IMR-90 (cell line): ENCODE measurements at regions of chr11 and their contacts with region 1.

Region 1: DNA sequence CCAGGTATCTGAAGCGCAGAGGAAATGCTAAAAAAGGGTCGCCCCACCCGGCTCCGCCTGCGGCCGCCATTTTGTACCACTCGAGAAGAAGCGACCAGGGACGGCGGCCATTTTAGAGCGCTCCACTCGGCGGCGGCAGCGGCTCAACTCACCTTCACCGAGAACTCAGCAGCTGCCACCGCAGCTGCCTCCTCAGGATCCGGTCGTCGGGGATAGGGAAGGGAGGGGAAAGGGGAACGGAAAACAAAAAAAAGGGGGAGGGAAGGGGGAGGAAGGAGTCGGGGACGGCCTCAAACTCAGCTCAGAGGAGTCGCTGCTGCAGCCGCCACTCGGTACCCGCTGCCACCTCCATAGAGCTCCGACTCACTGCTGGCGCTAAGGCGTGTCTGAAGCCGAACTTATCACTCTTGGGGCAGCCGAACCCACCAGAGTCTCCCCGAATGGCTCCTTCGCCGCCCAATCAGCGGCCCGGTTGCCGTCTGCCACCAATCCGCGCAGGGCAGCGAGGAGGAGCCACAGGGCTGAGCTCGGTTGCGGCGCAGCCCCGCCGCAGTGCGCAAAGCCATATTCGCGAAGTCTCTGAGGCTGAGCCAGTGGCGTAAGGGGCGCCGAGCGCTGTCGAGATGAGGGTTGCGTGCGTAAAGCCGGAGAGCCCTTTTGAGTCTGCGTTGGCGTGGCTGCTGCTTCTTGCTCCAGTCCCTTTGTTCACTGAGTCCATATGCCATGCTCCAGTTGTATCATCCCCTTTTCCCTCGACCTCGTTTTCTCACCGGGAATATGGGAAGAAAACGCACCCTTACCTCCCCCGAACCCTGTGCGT is at the start of gene EIF4G2:
- DNase-seq: peak; percentile 99
- ATAC-seq: peak; percentile 95
- H3K4me3 ChIP-seq: peak within 1 kb of the TSS; percentile 96
- H3K27ac ChIP-seq: peak within 1 kb of the TSS; percentile 99
- H3K4me1 ChIP-seq: peaks cover 4% of the 10 kb centered on the region
- H3K27me3 ChIP-seq: no peaks in the 10 kb centered on the region
- CTCF ChIP-seq: no peak
- POLR2A ChIP-seq: peak; percentile 100
- RAD21 ChIP-seq: no peak; the same call in 1 of the 2 replicates
- total RNA-seq, gene EIF4G2: 1,144 and 1,216 TPM in 2 replicates

Region 2: GRCh38 chr11:10779086-10779485 is 29.7 kb before region 1 on chr11:
- CTCF ChIA-PET with region 1: interaction called, 4 read pairs
- POLR2A ChIA-PET with region 1: interaction called, 5 read pairs
- dilution Hi-C with region 1: no loop called
- in situ Hi-C with region 1: no loop called
- intact Hi-C with region 1: loop called (anchors 1 kb)
- DNase-seq: no peak
- ATAC-seq: no peak
- H3K4me3 ChIP-seq: no peak overlapping the region
- H3K27ac ChIP-seq: peak overlapping the region; percentile 49
- H3K4me1 ChIP-seq: peaks cover 10% of the 10 kb centered on the region
- H3K27me3 ChIP-seq: no peaks in the 10 kb centered on the region
- CTCF ChIP-seq: no peak
- POLR2A ChIP-seq: no peak
- RAD21 ChIP-seq: no peak

Region 3: DNA sequence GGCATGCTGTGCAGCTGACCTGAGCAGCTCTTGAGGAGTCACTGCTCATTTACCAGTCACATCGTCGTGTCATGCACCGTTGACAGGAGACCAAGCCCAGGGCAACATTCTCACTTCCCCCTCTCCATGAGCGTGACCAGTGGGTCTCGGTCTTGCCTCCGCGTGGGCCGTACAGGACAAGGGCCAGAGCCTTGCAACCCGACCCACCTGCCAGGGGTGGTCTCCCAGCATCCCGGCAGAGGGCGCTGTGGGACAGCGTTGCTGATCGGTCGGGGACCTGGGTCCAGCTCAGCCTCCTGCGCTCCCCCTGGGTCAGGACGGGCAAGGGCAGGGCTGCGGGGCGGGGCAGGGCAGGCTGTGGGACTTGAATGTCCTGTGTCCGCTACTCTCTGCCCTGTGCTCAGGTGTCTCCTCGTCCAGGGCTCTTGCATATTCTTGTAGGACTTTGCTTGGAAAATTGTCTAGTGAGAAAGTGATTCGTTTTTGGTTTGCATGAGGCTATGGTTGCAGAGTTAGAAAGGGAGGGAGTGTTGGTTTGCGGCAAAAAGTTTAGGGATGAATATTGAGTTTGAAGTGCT is 16.3 kb before region 1 on chr11:
- CTCF ChIA-PET with region 1: interaction called, 9 read pairs
- POLR2A ChIA-PET with region 1: interaction called, 26 read pairs
- dilution Hi-C with region 1: no loop called
- in situ Hi-C with region 1: no loop called
- intact Hi-C with region 1: no loop called
- DNase-seq: peak; percentile 62
- ATAC-seq: peak; percentile 94
- H3K4me3 ChIP-seq: no peak overlapping the region
- H3K27ac ChIP-seq: no peak overlapping the region
- H3K4me1 ChIP-seq: no peaks in the 10 kb centered on the region
- H3K27me3 ChIP-seq: no peaks in the 10 kb centered on the region
- CTCF ChIP-seq: peak; percentile 93
- POLR2A ChIP-seq: no peak
- RAD21 ChIP-seq: peak; percentile 92

Region 4: DNA sequence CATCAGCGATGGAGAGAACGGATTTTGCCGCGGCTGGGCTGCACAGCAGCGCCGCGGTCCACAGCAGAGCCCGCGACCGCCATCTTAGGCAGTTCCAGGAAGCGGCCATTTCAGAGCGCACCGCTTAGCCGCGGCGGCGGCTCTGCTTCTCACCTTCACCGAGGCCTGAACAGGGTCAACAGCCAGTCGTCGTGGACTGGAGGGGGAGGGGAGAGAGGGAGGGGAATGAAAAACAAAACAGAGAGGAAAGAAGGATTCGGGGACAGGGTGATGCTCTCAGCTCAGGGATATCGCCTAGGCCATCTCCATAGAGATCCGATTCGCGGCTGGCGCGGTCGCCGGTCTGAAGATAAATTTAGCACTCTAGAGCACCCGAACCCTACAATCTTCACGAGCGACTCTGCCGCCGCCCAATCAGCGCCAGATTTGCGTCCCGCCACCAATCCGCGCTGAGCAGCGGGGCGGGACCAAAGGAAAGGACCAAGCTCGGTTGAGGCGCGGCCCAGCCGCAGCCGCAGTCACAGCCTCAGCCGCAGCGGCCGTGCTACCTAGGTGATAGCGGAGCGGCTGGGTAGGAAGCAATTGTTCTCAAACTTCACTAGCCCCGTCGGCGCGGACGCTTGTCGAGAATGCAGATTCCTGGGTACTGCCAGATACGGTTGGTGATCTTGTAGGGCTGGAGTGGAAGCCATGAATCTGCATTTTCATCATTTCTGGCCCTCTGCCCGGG is 49.1 kb after region 1 on chr11 and contains the start of gene ZBED5:
- CTCF ChIA-PET with region 1: no interaction called
- POLR2A ChIA-PET with region 1: interaction called, 11 read pairs
- dilution Hi-C with region 1: no loop called
- in situ Hi-C with region 1: no loop called
- intact Hi-C with region 1: loop called (anchors 1 kb)
- DNase-seq: peak; percentile 97
- ATAC-seq: peak; percentile 95
- H3K4me3 ChIP-seq: peak within 1 kb of the TSS; percentile 67
- H3K27ac ChIP-seq: peak within 1 kb of the TSS; percentile 95
- H3K4me1 ChIP-seq: no peaks in the 10 kb centered on the region
- H3K27me3 ChIP-seq: no peaks in the 10 kb centered on the region
- CTCF ChIP-seq: 0 out of 2 replicates have a peak, but pooled peaks have one; percentile 7
- POLR2A ChIP-seq: peak; percentile 92
- RAD21 ChIP-seq: peak; percentile 31
- total RNA-seq, gene ZBED5: 30.8 and 35.6 TPM in 2 replicates

Region 5: GRCh38 chr11:10899121-10899830 is 90.5 kb after region 1 on chr11:
- CTCF ChIA-PET with region 1: interaction called, 3 read pairs
- POLR2A ChIA-PET with region 1: interaction called, 6 read pairs
- dilution Hi-C with region 1: no loop called
- in situ Hi-C with region 1: no loop called
- intact Hi-C with region 1: loop called (anchors 1 kb)
- DNase-seq: no peak
- ATAC-seq: peak; percentile 61
- H3K4me3 ChIP-seq: no peak overlapping the region
- H3K27ac ChIP-seq: peak overlapping the region; percentile 92
- H3K4me1 ChIP-seq: peaks cover 31% of the 10 kb centered on the region
- H3K27me3 ChIP-seq: no peaks in the 10 kb centered on the region
- CTCF ChIP-seq: no peak
- POLR2A ChIP-seq: no peak
- RAD21 ChIP-seq: no peak

Region 6: DNA sequence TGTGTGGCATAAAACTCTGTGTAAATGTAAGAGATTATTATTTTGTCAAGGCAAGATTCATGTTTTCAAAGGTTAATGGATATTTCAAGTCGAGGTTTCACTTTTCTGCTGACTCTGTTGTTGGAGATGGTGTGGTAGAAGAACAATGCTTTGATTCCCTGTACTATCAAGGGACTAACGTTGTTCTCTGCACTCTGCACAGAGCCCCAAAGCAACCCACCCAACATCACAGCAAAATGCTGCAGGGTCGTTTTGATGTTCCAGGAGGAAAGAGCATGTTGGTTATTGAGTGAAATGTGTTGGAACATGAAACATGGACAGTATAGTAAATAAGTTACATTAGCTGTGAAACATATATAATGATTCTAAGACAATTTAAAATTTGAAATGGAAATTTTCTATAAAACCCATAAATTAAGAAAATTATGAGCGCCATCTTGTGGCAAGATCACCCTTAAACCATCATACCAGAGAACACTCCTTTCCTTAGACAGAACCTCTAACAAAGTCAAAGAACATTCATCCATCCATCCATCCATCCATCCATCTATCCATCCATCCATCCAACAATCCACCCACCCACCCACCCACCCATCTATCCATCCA is 213.5 kb after region 1 on chr11:
- CTCF ChIA-PET with region 1: no interaction called
- POLR2A ChIA-PET with region 1: no interaction called
- dilution Hi-C with region 1: no loop called
- in situ Hi-C with region 1: no loop called
- intact Hi-C with region 1: loop called (anchors 5 kb)
- DNase-seq: peak; percentile 24
- ATAC-seq: peak; percentile 55; the same call in 1 of the 2 replicates
- H3K4me3 ChIP-seq: no peak overlapping the region
- H3K27ac ChIP-seq: no peak overlapping the region
- H3K4me1 ChIP-seq: peaks cover 1% of the 10 kb centered on the region; the same call in 1 of the 2 replicates
- H3K27me3 ChIP-seq: peaks cover 19% of the 10 kb centered on the region
- CTCF ChIP-seq: peak; percentile 62
- POLR2A ChIP-seq: no peak
- RAD21 ChIP-seq: peak; percentile 48